ENCODE measurements at regions of chr3 and their contacts with region 1.

Region 1: GRCh38 chr3:136196401-136197158 is 445 bp upstream of the MSL2 start:
- DNase-seq: peak; percentile 100
- H3K4me3 ChIP-seq: peak overlapping the region; percentile 90
- H3K27ac ChIP-seq: peak overlapping the region; percentile 99
- H3K27me3 ChIP-seq: no peaks in the 10 kb centered on the region
- CTCF ChIP-seq: no peak

Region 2: GRCh38 chr3:136109499-136109898 is 87.1 kb before region 1 on chr3:
- CTCF ChIA-PET with region 1: no interaction called
- POLR2A ChIA-PET with region 1: no interaction called
- DNase-seq: no peak
- H3K4me3 ChIP-seq: no peak overlapping the region
- H3K27ac ChIP-seq: no peak overlapping the region
- H3K27me3 ChIP-seq: no peaks in the 10 kb centered on the region
- CTCF ChIP-seq: no peak

Region 3: GRCh38 chr3:136239094-136239493 is 42.5 kb after region 1 on chr3:
- CTCF ChIA-PET with region 1: interaction called, 5 read pairs
- POLR2A ChIA-PET with region 1: interaction called, 15 read pairs
- DNase-seq: no peak
- H3K4me3 ChIP-seq: no peak overlapping the region
- H3K27ac ChIP-seq: no peak overlapping the region
- H3K27me3 ChIP-seq: peaks cover 11% of the 10 kb centered on the region
- CTCF ChIP-seq: no peak

Region 4: GRCh38 chr3:136250226-136250902 is 53.8 kb after region 1 on chr3 and contains the start of gene PCCB:
- CTCF ChIA-PET with region 1: interaction called, 6 read pairs
- POLR2A ChIA-PET with region 1: interaction called, 12 read pairs
- DNase-seq: peak; percentile 81
- H3K4me3 ChIP-seq: peak within 1 kb of the TSS; percentile 85
- H3K27ac ChIP-seq: peak within 1 kb of the TSS; percentile 93
- H3K27me3 ChIP-seq: no peaks in the 10 kb centered on the region
- CTCF ChIP-seq: peak; percentile 80
- polyA plus RNA-seq, gene PCCB: 57.2 and 67.7 TPM in 2 replicates

Region 5: DNA sequence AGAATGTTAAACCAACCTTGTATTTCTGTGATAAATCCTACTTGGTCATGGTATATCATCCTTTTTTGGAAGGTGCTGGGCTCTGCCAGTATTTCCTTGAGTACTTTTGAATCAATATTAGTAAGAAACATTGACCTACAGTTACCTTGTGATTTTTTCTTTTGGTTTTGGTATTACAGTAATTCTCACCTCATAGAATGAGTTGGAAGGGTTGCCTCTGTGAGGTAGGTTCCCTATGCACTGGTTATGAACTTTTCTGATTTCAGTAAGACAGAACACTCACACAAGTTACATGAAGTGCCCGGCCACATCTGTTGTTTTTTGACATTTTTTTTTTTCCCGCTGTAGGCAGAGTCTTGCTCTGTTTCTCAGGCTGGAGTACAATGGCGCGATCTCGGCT is 73.6 kb after region 1 on chr3:
- CTCF ChIA-PET with region 1: interaction called, 3 read pairs
- POLR2A ChIA-PET with region 1: interaction called, 13 read pairs
- DNase-seq: no peak
- H3K4me3 ChIP-seq: no peak overlapping the region
- H3K27ac ChIP-seq: no peak overlapping the region
- H3K27me3 ChIP-seq: no peaks in the 10 kb centered on the region
- CTCF ChIP-seq: no peak